GM12878 (cell line): ENCODE measurements at regions of chr19 and their contacts with region 1.

Region 1: GRCh38 chr19:8893410-8893809 is 61.2 kb downstream of the MBD3L1 start:
- DNase-seq: no peak
- ATAC-seq: no peak
- H3K4me3 ChIP-seq: no peak overlapping the region
- H3K27ac ChIP-seq: no peak overlapping the region
- H3K4me1 ChIP-seq: no peaks in the 10 kb centered on the region
- H3K27me3 ChIP-seq: no peaks in the 10 kb centered on the region
- CTCF ChIP-seq: no peak
- EP300 ChIP-seq: no peak
- POLR2A ChIP-seq: no peak
- RAD21 ChIP-seq: no peak

Region 2: DNA sequence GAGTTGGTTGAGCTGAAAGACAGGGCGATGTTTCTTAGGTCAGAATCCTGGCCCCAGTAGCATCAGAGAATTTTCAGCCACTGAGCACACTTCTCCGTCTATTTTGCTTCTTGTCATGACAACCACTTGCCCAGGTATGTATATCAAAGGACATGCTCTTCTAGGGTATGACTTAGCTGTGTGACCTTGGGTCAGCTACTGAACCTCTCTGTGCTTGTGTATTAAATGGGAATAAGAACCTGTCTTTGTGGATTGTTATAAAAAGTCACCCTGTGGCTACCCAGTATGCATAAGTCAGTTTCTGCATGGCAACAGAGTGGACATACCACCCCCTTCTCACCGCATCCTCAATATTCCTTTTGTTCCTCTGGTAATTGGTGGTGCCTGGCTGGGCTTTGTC is 35.1 kb before region 1 on chr19:
- CTCF ChIA-PET with region 1: no interaction called
- POLR2A ChIA-PET with region 1: no interaction called
- RAD21 ChIA-PET with region 1: no interaction called
- SMC1A ChIA-PET with region 1: no interaction called
- in situ Hi-C with region 1: no loop called
- intact Hi-C with region 1: loop called (anchors 2 kb)
- DNase-seq: no peak
- ATAC-seq: no peak
- H3K4me3 ChIP-seq: no peak overlapping the region
- H3K27ac ChIP-seq: no peak overlapping the region
- H3K4me1 ChIP-seq: no peaks in the 10 kb centered on the region
- H3K27me3 ChIP-seq: no peaks in the 10 kb centered on the region
- CTCF ChIP-seq: no peak
- EP300 ChIP-seq: no peak
- POLR2A ChIP-seq: no peak
- RAD21 ChIP-seq: no peak